Caco-2 (cell line): ENCODE measurements at regions of chr10 and their contacts with region 1.

Region 1: GRCh38 chr10:3527869-3528268 is 257.1 kb downstream of the KLF6 start:
- DNase-seq: no peak
- H3K4me3 ChIP-seq: no peak overlapping the region
- H3K4me3 Mint-ChIP-seq: no peak overlapping the region
- H3K27ac Mint-ChIP-seq: no peak overlapping the region
- H3K4me1 ChIP-seq: 0 out of 2 replicates have a peak, but pooled peaks cover 4% of the 10 kb centered on the region
- H3K4me1 Mint-ChIP-seq: peaks cover 7% of the 10 kb centered on the region
- H3K27me3 ChIP-seq: no peaks in the 10 kb centered on the region
- H3K27me3 Mint-ChIP-seq: no peaks in the 10 kb centered on the region
- CTCF ChIP-seq: no peak

Region 2: DNA sequence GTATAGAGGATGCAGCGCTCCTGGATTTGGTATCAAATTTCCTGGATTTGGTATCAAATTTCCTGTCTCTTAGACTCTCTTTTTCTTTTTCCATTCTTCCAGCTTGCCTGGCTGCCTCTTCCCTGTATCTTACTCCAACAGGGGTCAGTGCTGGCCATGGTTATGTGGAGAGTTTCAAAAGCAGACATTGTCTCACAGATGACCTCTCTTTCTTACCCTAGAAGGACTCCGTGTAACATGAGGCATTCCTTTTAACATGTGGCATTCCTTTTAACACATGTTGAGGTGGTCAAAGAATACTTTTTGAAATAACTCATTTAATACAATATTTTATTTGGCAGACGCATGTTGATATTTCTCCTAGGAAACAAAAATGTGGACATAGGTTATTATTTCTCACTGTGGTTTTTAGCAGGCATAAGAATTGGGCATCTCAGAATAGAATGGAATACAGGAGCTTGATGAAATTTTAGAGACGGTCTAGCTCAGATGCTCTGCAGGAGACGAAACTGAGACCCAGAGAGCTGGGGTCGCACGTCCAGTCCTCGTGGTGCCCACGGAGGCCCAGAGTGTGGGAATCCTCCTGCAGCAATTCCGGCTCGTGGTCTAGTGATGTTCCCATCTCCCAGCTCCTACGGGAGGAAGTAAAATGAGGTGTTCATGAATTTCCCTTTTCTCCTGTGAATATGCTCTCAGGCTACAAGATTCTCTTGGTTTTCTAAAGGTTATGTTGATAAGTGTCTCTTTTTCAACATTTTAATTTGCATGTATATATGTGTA is 295.7 kb before region 1 on chr10:
- CTCF ChIA-PET with region 1: no interaction called
- POLR2A ChIA-PET with region 1: no interaction called
- intact Hi-C with region 1: no loop called
- DNase-seq: no peak
- H3K4me3 ChIP-seq: no peak overlapping the region
- H3K4me3 Mint-ChIP-seq: no peak overlapping the region
- H3K27ac Mint-ChIP-seq: no peak overlapping the region
- H3K4me1 ChIP-seq: no peaks in the 10 kb centered on the region; the same call in 1 of the 2 replicates
- H3K4me1 Mint-ChIP-seq: no peaks in the 10 kb centered on the region
- H3K27me3 ChIP-seq: no peaks in the 10 kb centered on the region
- H3K27me3 Mint-ChIP-seq: no peaks in the 10 kb centered on the region
- CTCF ChIP-seq: no peak

Region 3: DNA sequence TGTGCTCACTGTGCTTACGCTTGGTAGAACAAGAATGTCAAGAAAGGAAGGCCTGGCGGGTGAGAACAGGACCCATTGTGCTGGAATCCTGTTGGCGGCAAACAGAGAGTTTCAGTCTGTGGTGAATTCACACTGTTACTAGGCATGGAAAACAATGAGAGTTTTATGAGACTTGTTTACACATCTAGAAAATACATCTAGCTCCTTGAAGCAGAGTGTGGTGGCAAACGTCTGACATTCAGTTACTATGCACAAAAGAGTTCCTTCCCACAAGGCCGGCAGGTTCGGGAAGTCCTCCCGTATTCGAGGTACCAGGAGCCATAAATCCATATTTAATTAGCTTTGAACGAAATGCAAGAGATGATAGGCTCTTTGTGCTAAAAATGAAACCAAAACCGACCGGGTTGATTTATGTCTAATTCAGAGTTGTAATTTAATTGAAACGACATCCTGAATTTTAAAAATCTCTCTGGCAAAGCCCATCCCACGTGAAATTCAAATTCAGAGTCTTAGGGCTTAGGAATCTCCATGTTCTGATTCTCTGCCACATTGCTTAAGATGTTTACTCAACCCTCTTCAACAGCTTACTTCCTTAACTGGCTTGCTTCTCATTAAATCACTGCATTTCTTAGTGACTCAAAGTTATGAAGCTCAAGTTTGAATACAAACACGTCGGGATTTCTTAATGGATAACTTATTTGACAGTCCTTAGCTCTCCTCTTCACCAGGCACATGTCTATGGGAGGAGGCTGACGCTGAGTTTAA is 55.4 kb before region 1 on chr10:
- CTCF ChIA-PET with region 1: no interaction called
- POLR2A ChIA-PET with region 1: no interaction called
- intact Hi-C with region 1: no loop called
- DNase-seq: no peak
- H3K4me3 ChIP-seq: no peak overlapping the region
- H3K4me3 Mint-ChIP-seq: no peak overlapping the region
- H3K27ac Mint-ChIP-seq: no peak overlapping the region
- H3K4me1 ChIP-seq: peaks cover 15% of the 10 kb centered on the region
- H3K4me1 Mint-ChIP-seq: peaks cover 22% of the 10 kb centered on the region
- H3K27me3 ChIP-seq: no peaks in the 10 kb centered on the region
- H3K27me3 Mint-ChIP-seq: no peaks in the 10 kb centered on the region
- CTCF ChIP-seq: no peak

Region 4: DNA sequence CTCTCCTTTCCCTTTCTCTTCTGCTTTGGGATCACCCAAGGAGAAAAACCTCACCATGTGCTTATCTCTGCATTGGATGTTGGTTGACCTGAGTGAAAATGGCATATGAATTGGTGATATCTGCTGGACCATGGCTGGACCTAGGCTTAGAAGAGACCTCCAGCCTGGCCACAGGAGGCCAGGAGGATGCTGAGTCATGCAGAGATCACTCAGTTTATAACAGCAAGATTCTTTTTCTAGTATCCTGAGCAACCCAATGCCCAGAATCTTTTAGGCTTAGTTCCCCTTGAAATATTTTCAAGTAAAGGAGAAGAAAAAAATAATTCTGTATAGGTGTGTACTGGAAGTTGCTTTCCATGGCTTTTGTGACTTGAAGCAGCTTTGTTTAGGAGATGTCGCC is 20.8 kb after region 1 on chr10:
- CTCF ChIA-PET with region 1: no interaction called
- POLR2A ChIA-PET with region 1: no interaction called
- intact Hi-C with region 1: loop called (anchors 2 kb)
- DNase-seq: no peak
- H3K4me3 ChIP-seq: no peak overlapping the region
- H3K4me3 Mint-ChIP-seq: no peak overlapping the region
- H3K27ac Mint-ChIP-seq: no peak overlapping the region
- H3K4me1 ChIP-seq: no peaks in the 10 kb centered on the region
- H3K4me1 Mint-ChIP-seq: no peaks in the 10 kb centered on the region
- H3K27me3 ChIP-seq: no peaks in the 10 kb centered on the region
- H3K27me3 Mint-ChIP-seq: no peaks in the 10 kb centered on the region
- CTCF ChIP-seq: no peak